ENCODE measurements at regions of chr11 and their contacts with region 1.

Region 1: DNA sequence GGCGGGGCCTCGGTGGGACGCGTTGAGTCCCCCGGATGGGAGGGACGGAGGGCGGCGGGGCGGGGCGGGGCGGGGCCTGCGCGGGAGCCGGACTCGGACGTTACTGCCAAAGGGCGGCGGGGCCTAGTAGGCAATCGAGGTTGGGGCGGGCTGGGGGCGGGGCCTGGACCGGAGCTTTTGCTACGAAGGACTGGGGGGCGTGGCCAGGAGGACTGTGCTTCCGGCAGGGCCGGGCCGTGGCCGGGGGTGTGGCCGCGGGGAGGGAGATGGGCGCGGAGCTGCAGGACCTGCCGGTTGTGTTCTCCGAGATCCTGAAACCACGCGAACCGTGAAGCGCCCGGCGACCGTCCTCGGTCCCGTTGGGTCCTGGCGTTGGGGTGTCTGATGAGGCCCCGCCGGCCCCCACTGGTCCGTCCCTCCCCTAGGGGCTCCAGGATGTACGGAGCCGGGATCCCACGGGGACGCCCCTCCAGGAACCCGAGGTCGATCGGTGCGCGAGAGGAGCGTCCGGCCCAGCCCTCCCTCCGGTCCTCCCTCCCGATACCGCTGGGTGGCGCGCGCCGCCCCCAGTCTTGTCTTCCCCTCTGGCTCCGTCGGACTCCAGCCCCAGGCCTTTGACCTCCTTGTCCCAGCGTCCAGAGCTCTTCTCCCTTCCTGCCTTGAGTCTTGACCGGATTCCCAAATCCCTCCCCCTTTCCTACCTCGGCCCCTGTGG is 648 bp upstream of the NUDT8 start:
- DNase-seq: peak; percentile 99
- H3K4me3 ChIP-seq: peak overlapping the region; percentile 69 to 81
- H3K27ac ChIP-seq: peak overlapping the region; percentile 66 to 81; a peak in 3 of 4 replicates
- H3K4me1 ChIP-seq: peaks cover 0 to 13% of the 10 kb centered on the region in 2 experiments; a peak in 1 of 4 replicates
- H3K27me3 ChIP-seq: no peaks in the 10 kb centered on the region
- CTCF ChIP-seq: peak; percentile 75
- EP300 ChIP-seq: no peak
- RAD21 ChIP-seq: peak; percentile 48

Region 2: GRCh38 chr11:67572747-67573419 is 57.5 kb before region 1 on chr11:
- CTCF ChIA-PET with region 1: interaction called, 18 read pairs
- POLR2A ChIA-PET with region 1: no interaction called
- DNase-seq: peak; percentile 53
- H3K4me3 ChIP-seq: no peak overlapping the region
- H3K27ac ChIP-seq: no peak overlapping the region
- H3K4me1 ChIP-seq: peaks cover 0 to 6% of the 10 kb centered on the region in 2 experiments; a peak in 1 of 4 replicates
- H3K27me3 ChIP-seq: peaks cover 6% of the 10 kb centered on the region
- CTCF ChIP-seq: peak; percentile 64
- EP300 ChIP-seq: no peak
- RAD21 ChIP-seq: peak; percentile 79

Region 3: DNA sequence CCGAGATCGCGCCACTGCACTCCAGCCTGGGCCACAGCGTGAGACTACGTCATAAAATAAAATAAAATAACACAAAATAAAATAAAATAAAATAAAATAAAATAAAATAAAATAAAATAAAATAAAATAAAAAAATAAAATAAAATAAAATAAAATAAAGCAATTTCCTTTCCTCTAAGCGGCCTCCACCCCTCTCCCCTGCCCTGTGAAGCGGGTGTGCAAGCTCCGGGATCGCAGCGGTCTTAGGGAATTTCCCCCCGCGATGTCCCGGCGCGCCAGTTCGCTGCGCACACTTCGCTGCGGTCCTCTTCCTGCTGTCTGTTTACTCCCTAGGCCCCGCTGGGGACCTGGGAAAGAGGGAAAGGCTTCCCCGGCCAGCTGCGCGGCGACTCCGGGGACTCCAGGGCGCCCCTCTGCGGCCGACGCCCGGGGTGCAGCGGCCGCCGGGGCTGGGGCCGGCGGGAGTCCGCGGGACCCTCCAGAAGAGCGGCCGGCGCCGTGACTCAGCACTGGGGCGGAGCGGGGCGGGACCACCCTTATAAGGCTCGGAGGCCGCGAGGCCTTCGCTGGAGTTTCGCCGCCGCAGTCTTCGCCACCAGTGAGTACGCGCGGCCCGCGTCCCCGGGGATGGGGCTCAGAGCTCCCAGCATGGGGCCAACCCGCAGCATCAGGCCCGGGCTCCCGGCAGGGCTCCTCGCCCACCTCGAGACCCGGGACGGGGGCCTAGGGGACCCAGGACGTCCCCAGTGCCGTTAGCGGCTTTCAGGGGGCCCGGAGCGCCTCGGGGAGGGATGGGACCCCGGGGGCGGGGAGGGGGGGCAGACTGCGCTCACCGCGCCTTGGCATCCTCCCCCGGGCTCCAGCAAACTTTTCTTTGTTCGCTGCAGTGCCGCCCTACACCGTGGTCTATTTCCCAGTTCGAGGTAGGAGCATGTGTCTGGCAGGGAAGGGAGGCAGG is 46.9 kb before region 1 on chr11 and contains the start of gene GSTP1:
- CTCF ChIA-PET with region 1: interaction called, 18 read pairs
- POLR2A ChIA-PET with region 1: interaction called, 9 read pairs
- DNase-seq: peak; percentile 95
- H3K4me3 ChIP-seq: peak within 1 kb of the TSS; percentile 68 to 77
- H3K27ac ChIP-seq: peak within 1 kb of the TSS; percentile 61 to 84
- H3K4me1 ChIP-seq: peaks cover 10 to 14% of the 10 kb centered on the region in 2 experiments; a peak in 3 of 4 replicates
- H3K27me3 ChIP-seq: no peaks in the 10 kb centered on the region
- CTCF ChIP-seq: peak; percentile 74
- EP300 ChIP-seq: peak in 1 of 2 experiments; percentile 34; a peak in 2 of 4 replicates
- RAD21 ChIP-seq: peak; percentile 51
- polyA plus RNA-seq, gene GSTP1: 488 and 745 TPM in 2 replicates

Region 4: DNA sequence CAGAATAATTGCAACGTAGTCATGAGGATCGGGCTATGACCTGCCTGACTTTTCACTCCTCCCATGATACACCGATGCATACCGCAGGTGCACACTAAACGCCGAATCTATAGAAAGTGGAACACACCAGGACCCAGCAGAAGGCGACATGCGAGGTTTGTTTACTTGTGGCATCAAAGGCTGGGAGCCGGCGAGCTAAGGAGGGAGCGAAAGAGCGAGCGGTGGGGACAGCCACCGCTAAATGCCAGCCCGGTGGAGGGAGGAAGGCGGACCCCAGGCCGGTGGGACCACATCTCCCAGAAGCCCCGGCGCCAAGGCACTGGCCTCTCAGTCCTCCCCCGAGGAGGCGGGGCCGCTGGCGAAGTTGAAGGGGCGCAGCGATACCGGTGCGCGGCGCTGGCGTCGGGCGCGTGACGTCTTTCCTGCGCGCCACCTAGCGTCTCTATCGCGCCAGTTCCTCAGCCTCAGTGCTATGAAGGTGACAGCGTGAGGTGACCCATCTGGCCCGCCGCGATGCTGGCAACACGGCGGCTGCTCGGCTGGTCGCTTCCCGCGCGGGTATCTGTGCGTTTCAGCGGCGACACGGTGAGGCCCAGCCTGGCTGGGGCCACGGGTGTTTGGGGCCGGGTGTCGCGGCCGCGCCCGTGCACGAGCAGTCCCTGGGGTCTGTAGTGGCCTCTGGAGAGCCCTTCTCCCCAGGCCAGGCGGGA is 23.7 kb before region 1 on chr11 and contains the start of gene NDUFV1:
- CTCF ChIA-PET with region 1: interaction called, 107 read pairs
- POLR2A ChIA-PET with region 1: no interaction called
- DNase-seq: peak; percentile 98
- H3K4me3 ChIP-seq: peak within 1 kb of the TSS; percentile 96 to 98
- H3K27ac ChIP-seq: peak within 1 kb of the TSS in 1 of 2 experiments; percentile 55; a peak in 2 of 4 replicates
- H3K4me1 ChIP-seq: peaks cover 7 to 13% of the 10 kb centered on the region in 2 experiments; a peak in 3 of 4 replicates
- H3K27me3 ChIP-seq: no peaks in the 10 kb centered on the region
- CTCF ChIP-seq: peak; percentile 52
- EP300 ChIP-seq: no peak
- RAD21 ChIP-seq: 0 out of 2 replicates have a peak, but pooled peaks have one; percentile 24
- polyA plus RNA-seq, gene NDUFV1: 220 and 278 TPM in 2 replicates

Region 5: GRCh38 chr11:67613960-67614715 is 16.2 kb before region 1 on chr11:
- CTCF ChIA-PET with region 1: interaction called, 107 read pairs
- POLR2A ChIA-PET with region 1: interaction called, 4 read pairs
- DNase-seq: peak; percentile 84
- H3K4me3 ChIP-seq: no peak overlapping the region
- H3K27ac ChIP-seq: no peak overlapping the region
- H3K4me1 ChIP-seq: no peaks in the 10 kb centered on the region; a peak in 1 of 4 replicates
- H3K27me3 ChIP-seq: no peaks in the 10 kb centered on the region
- CTCF ChIP-seq: peak; percentile 71
- EP300 ChIP-seq: no peak
- RAD21 ChIP-seq: peak; percentile 35

Region 6: DNA sequence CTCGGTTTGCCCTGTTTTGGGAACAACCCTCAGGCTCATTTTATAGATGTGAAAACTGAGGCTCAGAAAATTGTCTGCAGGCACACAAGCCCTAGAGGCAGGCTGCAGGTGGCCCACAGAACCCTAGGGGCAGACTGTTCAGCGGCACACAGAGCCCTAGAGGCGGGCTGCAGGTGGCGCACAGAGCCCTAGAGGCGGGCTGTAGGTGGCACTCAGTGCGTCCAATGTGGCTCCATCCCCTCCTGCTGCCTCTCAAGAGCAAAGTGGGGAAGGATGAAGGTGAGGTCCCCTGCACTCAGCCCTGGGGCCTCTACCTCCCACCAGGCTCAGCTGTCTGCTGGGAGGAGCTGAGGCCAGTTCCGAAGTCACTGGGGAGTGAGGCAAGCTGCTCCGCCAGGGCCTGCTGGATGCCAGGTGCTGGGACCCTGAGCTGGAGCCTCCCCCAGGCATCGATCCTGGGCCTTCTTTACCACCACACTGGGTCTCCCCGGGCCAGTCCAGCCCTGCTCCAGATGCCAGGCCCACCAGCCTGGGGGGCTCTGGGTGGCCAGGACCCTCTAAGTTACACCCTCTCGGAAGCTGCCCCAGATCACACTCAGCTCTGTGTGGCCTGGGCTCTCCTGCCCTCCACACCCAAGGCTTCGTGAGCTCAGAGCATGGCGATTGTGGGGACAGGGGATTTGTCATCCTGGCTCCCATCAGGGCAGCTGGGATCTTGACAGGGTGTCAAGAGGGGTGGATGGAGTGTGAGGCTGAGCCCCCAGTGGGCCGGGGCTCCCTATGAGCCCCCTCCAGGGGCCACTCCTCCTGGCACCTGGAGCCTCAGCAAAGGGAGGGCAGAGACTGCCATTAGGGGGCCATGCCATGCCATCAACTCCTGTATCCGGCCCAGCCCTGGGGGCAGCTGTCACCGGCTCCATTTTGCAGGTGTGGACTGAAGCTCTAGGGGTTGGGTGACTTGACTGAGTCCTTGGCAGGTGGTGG is 18.0 kb after region 1 on chr11:
- CTCF ChIA-PET with region 1: interaction called, 308 read pairs
- POLR2A ChIA-PET with region 1: interaction called, 3 read pairs
- DNase-seq: no peak
- H3K4me3 ChIP-seq: no peak overlapping the region
- H3K27ac ChIP-seq: no peak overlapping the region
- H3K4me1 ChIP-seq: no peaks in the 10 kb centered on the region; a peak in 1 of 4 replicates
- H3K27me3 ChIP-seq: no peaks in the 10 kb centered on the region
- CTCF ChIP-seq: no peak
- EP300 ChIP-seq: no peak
- RAD21 ChIP-seq: no peak

Region 7: GRCh38 chr11:67691149-67691548 is 60.8 kb after region 1 on chr11:
- CTCF ChIA-PET with region 1: interaction called, 18 read pairs
- POLR2A ChIA-PET with region 1: no interaction called
- DNase-seq: no peak
- H3K4me3 ChIP-seq: no peak overlapping the region
- H3K27ac ChIP-seq: no peak overlapping the region
- H3K4me1 ChIP-seq: no peaks in the 10 kb centered on the region
- H3K27me3 ChIP-seq: peaks cover 27% of the 10 kb centered on the region; the same call in 1 of the 2 replicates
- CTCF ChIP-seq: peak; percentile 23; the same call in 1 of the 2 replicates
- EP300 ChIP-seq: no peak
- RAD21 ChIP-seq: peak; percentile 39